CD4-positive, alpha-beta memory T cell (primary cell): ENCODE measurements at regions of chr12 and their contacts with region 1.

Region 1: DNA sequence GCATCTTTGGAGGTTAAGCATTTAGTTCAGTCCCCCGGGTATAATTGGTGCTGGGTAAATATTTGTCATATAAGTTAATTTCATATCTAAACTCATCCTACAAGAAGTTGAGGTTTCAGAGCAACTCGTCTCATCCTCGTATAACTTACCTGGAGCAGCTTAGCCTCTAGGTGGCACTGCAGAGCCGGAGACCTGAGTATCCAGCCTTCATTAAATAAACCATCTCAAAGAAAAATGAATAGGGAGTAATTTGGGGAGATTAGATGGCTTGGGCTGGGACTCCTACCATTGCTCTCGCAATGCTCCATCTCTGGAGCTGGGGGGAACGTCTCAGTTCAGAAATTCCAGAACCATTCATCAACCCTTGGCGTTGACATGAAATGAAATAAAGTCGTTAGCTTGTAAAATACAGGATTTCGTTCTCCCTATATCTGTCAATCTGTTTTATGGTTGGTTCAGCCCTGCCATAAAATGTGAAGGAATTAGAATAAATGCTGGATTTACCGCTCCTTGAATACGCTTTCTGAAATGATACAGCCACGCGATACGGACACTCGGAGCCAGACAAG is 122.9 kb upstream of the TMEM132D start:
- DNase-seq: no peak
- H3K4me3 ChIP-seq: no peak overlapping the region
- H3K4me3 Mint-ChIP-seq: no peak overlapping the region
- H3K27ac ChIP-seq: no peak overlapping the region
- H3K27ac Mint-ChIP-seq: no peak overlapping the region
- H3K4me1 ChIP-seq: no peaks in the 10 kb centered on the region
- H3K4me1 Mint-ChIP-seq: no peaks in the 10 kb centered on the region
- H3K27me3 ChIP-seq: no peaks in the 10 kb centered on the region
- H3K27me3 Mint-ChIP-seq: peaks cover 0 to 13% of the 10 kb centered on the region in 2 donors

Region 2: GRCh38 chr12:129844662-129845220 is 182.0 kb before region 1 on chr12:
- CTCF ChIA-PET with region 1: no interaction called
- POLR2A ChIA-PET with region 1: no interaction called
- intact Hi-C with region 1: no loop called
- DNase-seq: no peak
- H3K4me3 ChIP-seq: no peak overlapping the region
- H3K4me3 Mint-ChIP-seq: no peak overlapping the region
- H3K27ac ChIP-seq: no peak overlapping the region
- H3K27ac Mint-ChIP-seq: no peak overlapping the region
- H3K4me1 ChIP-seq: no peaks in the 10 kb centered on the region
- H3K4me1 Mint-ChIP-seq: no peaks in the 10 kb centered on the region
- H3K27me3 ChIP-seq: no peaks in the 10 kb centered on the region
- H3K27me3 Mint-ChIP-seq: no peaks in the 10 kb centered on the region

Region 3: DNA sequence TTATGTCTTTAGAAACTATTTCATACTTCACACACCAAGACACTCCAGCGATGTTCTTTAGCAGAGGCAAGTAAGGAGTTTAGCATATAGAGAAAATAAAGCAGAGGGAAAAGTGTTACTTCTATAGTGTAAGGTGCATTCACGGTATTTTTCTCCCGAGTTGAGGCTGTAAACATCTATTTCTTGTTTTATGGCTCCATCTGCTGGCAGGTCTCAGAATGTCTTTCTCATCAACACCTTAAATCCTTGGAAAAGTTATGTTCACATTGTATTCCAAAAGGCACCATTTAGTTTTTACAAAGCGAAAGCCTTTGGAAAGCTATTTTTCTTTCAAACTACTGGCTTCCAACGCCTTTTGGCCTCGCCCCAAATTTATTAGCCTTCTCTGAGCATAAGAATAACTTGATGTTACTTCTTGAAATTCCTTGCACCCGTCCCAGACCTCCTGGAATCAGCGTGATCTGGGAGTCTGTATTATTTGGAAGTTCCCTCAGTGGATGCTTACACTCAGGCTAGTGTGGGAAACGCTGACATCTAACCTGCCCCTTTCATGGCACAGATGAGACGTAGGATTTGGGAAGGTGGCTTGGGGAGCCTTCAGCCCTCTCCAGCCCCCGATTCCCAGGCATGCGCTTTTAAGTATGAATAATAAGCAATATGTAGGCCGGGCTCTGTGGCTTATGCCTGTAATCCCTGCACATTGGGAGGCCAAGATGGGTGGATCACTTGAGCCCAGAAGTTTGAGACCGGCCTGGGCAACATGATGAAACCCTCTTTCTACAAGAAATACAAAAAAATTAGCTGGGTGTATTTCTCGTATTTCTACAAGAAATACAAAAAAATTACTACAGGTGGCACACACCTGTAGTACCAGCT is 309.1 kb after region 1 on chr12:
- CTCF ChIA-PET with region 1: no interaction called
- POLR2A ChIA-PET with region 1: no interaction called
- intact Hi-C with region 1: loop called (anchors 1 kb)
- DNase-seq: peak in 3 of 5 donors; percentile 25 to 27 (median 27)
- H3K4me3 ChIP-seq: no peak overlapping the region
- H3K4me3 Mint-ChIP-seq: no peak overlapping the region
- H3K27ac ChIP-seq: no peak overlapping the region
- H3K27ac Mint-ChIP-seq: no peak overlapping the region
- H3K4me1 ChIP-seq: no peaks in the 10 kb centered on the region
- H3K4me1 Mint-ChIP-seq: peaks cover 0 to 7% (median 2%) of the 10 kb centered on the region in 4 donors
- H3K27me3 ChIP-seq: no peaks in the 10 kb centered on the region
- H3K27me3 Mint-ChIP-seq: peaks cover 10% of the 10 kb centered on the region in 2 donors